ENCODE measurements at regions of chr20 and their contacts with region 1.

Region 1: GRCh38 chr20:13819885-13820645 is 35.2 kb downstream of the NDUFAF5 start:
- DNase-seq: no peak
- H3K4me3 ChIP-seq: no peak overlapping the region
- H3K27ac ChIP-seq: no peak overlapping the region
- H3K4me1 ChIP-seq: no peaks in the 10 kb centered on the region
- H3K27me3 ChIP-seq: no peaks in the 10 kb centered on the region
- CTCF ChIP-seq: peak; percentile 65 to 82

Region 2: GRCh38 chr20:13953227-13953626 is 133.2 kb after region 1 on chr20:
- intact Hi-C with region 1: loop called (anchors 10 kb)
- DNase-seq: no peak
- H3K4me3 ChIP-seq: no peak overlapping the region
- H3K27ac ChIP-seq: no peak overlapping the region
- H3K4me1 ChIP-seq: no peaks in the 10 kb centered on the region
- H3K27me3 ChIP-seq: no peaks in the 10 kb centered on the region
- CTCF ChIP-seq: no peak

Region 3: DNA sequence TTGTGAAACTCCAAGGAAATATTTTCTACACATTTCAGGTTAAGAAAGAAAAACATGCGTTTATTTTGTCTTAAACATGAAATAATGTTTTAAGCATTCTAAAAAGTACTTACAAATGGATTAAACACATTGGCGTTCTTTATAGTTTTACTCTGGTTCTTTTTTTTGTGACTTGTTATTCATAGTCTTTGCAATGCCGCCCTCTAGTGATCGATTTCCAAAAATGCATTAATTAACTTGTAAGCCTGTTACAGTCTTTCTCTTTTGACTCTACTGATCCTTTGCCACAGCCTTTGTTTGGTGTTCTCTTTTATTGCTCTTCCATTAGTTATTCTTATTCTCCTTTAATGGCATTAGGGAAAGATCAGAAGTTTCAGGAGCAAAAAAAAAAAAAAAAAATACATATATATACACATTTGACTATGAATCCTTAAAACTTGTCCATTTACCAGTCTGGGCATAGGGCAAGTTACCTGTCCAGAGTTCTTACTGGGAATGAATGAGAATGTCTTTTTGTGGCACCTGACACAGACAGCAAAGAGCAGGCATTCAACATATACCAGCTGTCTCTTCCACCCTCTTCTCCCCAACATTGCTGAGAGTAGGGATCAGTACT is 235.2 kb after region 1 on chr20:
- intact Hi-C with region 1: loop called (anchors 2 kb)
- DNase-seq: no peak
- H3K4me3 ChIP-seq: no peak overlapping the region
- H3K27ac ChIP-seq: peak overlapping the region in 1 of 2 donors; percentile 21
- H3K4me1 ChIP-seq: peaks cover 0 to 12% (median 0%) of the 10 kb centered on the region in 4 donors
- H3K27me3 ChIP-seq: no peaks in the 10 kb centered on the region
- CTCF ChIP-seq: peak; percentile 50 to 64

Measured in tibial artery (tissue), 4 donors.